Right ventricle myocardium inferior (tissue), 1 donor: ENCODE measurements at regions of chr22 and their contacts with region 1.

Region 1: GRCh38 chr22:24951942-24952836 is at the start of gene KIAA1671:
- DNase-seq: peak; percentile 93
- ATAC-seq: peak; percentile 98
- total RNA-seq, gene KIAA1671: 12.8 TPM

Region 2: DNA sequence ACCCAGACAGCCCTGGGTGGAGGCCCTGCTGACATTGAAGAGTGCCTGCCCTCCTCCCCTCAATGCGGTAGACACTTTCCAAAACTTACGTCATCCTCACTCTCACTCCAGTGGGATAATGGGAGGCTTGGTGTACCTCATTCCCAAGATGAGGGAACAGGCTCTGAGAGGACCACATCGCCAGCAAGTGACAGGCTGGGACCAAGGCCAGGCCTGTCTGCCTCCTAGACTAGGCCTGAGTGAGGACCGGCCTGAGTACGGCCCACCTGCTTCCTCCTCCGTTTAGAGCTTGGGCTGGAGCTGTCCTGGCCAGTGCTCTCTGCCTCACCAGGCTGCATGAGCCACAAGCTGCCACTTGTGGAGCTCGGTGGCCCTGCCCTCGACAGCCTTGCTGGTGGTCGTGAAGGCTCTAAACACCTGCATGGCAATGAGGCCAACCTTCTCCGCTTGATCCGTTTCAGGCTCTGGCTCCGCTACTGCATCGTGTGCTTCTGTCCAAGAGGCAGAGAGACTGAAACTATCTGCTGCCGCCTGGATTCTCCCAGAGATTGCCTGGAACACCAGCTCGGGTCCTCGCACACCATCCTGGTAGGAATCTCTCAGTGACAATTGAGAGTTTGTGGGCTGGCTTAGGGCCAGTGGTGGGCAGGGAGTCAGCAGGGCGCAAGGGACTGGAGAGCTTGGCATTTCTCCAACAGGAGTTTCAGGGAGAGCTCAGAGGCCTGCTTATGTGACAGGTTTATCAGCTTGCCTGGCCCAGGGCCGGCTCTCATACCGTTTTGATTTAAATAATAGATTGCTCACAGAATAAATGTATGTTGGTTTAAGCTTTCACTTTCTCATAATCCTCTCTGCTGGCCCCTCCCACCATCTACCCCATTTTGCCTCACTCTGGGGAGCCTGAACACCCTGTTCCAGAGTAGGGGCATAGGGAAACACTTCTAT is 368.7 kb before region 1 on chr22:
- intact Hi-C with region 1: no loop called
- DNase-seq: no peak
- ATAC-seq: peak; percentile 62

Region 3: GRCh38 chr22:24901462-24901861 is 50.7 kb before region 1 on chr22:
- intact Hi-C with region 1: no loop called
- DNase-seq: no peak
- ATAC-seq: no peak

Region 4: DNA sequence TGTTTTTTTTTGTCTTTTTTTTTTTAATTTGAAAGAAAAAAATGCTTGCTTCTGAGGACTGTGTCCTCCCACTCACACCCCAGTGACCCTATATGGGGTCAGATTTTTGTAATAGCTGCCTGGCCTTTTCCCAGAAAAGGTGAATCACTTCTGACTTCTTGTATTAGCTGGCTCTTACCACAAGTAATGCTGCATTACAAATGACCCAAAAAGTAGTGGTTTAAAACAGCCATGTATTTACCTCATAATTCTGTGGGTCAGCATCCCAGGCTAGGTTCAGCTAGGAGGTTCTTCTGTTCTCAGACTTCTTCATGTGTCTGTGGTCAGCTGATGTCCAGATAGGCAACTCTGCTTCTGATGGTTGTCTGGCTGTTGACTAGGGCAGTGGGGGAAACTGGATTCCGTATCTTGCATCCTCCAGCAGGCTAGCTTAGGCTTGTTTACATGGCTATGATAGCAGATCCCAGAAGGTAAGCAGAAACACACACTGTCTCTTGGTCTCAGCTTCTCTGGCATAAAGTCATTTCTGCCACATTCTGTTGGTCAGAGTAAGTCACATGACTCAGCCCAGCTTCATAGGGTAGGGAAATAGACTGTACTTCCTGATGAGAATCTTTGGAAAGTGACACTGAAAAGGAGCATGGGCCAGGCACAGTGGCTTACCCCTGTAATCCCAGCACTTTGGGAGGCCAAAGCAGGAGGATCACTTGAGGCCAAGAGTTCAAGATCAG is 25.2 kb before region 1 on chr22:
- intact Hi-C with region 1: no loop called
- DNase-seq: no peak
- ATAC-seq: no peak

Region 5: DNA sequence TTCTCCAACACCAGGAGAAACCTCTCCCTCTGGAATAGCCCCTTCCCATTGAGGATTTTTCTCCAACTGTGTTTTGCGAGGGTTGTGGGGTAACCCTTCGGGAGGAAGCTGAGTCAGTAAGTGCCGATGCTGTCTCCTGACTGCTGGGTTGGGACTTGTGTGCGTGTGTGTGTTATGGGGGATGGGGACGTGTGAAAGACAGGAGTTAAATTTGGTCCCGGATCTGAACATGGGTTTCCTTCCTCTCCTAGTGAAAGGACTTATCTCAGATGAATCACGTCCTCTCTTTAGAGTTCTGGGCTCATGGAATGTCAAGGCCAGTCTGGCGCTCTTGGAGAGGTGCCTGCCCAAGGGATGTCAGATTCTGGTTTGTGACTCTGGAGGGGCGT is 33.6 kb after region 1 on chr22:
- intact Hi-C with region 1: loop called (anchors 5 kb)
- DNase-seq: no peak
- ATAC-seq: peak; percentile 25

Region 6: DNA sequence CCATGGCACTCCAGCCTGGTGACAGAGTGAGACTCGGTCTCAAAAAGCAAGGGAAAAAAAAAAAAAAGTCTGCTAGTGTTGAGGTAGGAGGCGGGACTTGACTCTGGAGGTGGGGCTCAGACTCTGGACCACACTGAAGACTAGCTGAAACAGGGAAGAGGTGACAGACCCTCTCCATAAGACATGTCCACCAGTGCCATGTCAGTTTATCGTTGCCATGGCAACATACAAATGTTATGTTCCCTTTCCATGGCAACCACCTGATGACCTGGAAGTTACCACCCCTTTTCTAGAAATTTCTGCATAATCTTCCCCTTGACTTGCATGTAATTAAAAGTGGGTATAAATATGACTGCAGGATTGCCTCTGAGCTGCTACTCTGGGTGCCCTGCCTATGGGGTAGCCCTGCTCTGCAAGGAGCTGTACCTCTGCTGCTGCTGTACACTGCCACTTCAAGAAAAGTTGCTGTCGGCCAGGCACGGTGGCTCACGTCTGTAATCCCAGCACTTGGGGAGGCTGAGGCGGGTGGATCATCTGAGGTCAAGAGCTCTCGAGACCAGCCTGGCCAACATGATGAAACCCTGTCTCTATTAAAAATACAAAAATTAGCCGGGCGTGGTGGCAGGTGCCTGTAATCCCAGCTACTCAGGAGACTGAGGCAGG is 55.4 kb after region 1 on chr22:
- intact Hi-C with region 1: no loop called
- DNase-seq: no peak
- ATAC-seq: no peak

Region 7: GRCh38 chr22:25027959-25028840 is 76.0 kb after region 1 on chr22:
- intact Hi-C with region 1: loop called (anchors 1 kb)
- DNase-seq: no peak
- ATAC-seq: no peak

Region 8: DNA sequence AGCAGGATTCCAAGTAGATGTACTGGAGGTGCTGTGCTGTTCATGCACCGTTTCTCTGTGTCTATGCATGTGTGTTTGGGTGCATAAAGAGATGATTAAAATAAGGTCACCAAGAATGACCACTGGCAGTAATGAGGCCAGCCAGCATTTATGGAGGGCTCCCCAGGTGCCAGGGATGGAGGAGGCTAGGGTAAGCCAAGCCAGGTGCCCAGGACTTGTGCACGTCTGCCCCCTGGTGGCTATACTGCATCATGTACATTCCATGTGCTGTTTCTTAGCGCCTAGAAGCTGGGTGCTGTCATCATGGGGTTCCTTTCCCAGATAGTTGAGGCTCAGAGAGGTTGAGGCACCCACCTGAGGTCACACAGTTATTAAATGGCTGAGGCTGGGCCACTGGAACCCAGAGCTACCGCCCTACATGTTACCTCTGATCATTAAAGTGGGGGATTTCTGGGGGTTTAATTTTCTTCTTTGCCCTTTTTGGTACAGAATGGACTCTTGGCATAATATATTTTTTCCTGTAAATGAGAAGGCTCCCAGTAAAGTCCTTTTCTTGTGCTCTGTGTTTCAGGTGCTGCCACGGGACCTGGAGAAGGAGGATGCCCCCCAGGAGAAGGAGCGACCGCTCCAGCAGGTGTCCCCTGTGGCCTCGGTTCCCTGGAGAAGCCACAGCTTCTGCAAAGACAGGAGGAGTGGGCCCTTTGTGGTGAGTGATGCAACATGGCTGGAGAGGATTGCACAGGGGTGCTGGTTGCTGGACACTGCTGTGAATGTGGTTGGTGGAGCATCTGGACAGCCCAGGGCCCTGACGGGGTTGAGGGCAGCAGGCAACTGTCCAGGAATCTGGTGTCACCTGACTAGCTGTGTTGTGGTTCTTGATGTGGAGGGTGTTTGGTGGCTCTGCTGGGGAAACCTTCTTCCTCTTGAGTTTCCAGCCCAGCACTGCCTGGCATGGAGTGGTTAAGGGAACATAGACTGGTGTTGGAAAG is 96.8 kb after region 1 on chr22:
- intact Hi-C with region 1: loop called (anchors 1 kb)
- DNase-seq: peak; percentile 46
- ATAC-seq: peak; percentile 77